ENCODE measurements at regions of chr2 and their contacts with region 1.

Region 1: GRCh38 chr2:120958623-120959366 is 223.1 kb downstream of the GLI2 start:
- DNase-seq: peak; percentile 27
- H3K4me3 ChIP-seq: no peak overlapping the region
- H3K27ac ChIP-seq: no peak overlapping the region
- H3K4me1 ChIP-seq: no peaks in the 10 kb centered on the region
- H3K27me3 ChIP-seq: no peaks in the 10 kb centered on the region
- CTCF ChIP-seq: no peak

Region 2: DNA sequence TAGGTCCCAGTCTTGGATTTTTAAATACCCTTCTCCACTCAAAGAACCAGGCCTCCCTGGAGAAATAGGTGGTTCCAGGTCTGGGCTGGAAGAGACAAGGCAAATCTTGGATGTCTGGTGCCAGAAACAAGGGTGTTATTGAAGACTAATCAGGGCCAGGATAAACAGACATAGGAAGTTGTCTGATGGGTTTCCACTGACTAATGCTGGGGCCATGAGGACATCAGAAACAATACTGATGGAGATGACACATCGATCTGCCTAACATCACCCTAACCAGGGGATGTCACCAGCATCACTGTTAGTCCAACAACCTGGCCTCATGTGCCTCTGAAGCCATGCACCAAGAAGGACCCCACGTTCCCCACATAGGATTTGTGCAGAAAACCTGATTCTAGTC is 265.7 kb before region 1 on chr2:
- intact Hi-C with region 1: loop called (anchors 10 kb)
- DNase-seq: no peak
- H3K4me3 ChIP-seq: no peak overlapping the region
- H3K27ac ChIP-seq: no peak overlapping the region
- H3K4me1 ChIP-seq: no peaks in the 10 kb centered on the region
- H3K27me3 ChIP-seq: peaks cover 7% of the 10 kb centered on the region
- CTCF ChIP-seq: no peak

Region 3: GRCh38 chr2:120771111-120771947 is 187.5 kb before region 1 on chr2:
- intact Hi-C with region 1: no loop called
- DNase-seq: peak; percentile 45
- H3K4me3 ChIP-seq: no peak overlapping the region
- H3K27ac ChIP-seq: peak overlapping the region; percentile 53
- H3K4me1 ChIP-seq: no peaks in the 10 kb centered on the region
- H3K27me3 ChIP-seq: no peaks in the 10 kb centered on the region
- CTCF ChIP-seq: no peak

Region 4: DNA sequence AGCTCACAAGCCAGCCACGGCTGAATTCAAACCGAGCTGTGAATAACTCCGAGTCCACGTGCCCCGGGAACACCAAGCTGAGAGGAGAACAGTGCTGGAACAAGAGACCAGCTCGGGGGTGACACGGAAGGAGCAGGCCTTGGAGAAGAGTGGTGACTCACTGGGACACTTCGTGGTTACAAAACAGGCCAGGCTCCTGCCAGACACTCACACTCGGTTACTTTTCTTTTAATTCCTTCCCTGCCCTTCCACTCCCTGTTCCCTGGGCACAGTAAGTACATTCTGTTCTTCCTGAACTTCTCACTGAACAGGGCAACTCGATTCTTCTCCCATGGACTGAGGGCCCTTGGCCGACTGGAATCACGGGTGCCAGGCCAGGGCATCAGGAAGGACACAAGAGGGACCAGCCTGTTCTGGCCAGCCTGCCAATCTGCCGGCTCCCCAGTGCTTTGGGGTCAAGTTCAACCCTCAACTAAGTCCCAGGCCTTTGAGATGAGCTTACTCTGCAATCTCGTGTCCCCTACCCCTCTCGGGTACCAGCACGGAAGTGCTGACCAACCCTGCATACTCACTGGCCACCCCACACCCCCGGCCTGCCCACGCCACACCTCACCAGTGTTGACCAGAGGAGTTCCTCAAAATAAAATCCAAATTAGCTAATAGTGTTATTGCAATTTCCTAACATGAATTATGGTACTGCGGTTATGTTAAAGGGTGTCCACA is 238.7 kb after region 1 on chr2:
- intact Hi-C with region 1: no loop called
- DNase-seq: peak; percentile 45
- H3K4me3 ChIP-seq: no peak overlapping the region
- H3K27ac ChIP-seq: peak overlapping the region; percentile 70
- H3K4me1 ChIP-seq: peaks cover under 1% of the 10 kb centered on the region
- H3K27me3 ChIP-seq: no peaks in the 10 kb centered on the region
- CTCF ChIP-seq: no peak